ENCODE measurements at regions of chr2 and their contacts with region 1.

Region 1: GRCh38 chr2:39913648-39914461 is 134.8 kb upstream of the THUMPD2 start:
- DNase-seq: no peak
- H3K4me3 ChIP-seq: no peak overlapping the region
- H3K27ac ChIP-seq: no peak overlapping the region
- H3K4me1 ChIP-seq: no peaks in the 10 kb centered on the region
- H3K27me3 ChIP-seq: no peaks in the 10 kb centered on the region
- CTCF ChIP-seq: peak; percentile 78

Region 2: GRCh38 chr2:40554668-40555285 is 640.9 kb after region 1 on chr2:
- intact Hi-C with region 1: loop called (anchors 2 kb)
- DNase-seq: peak; percentile 73
- H3K4me3 ChIP-seq: no peak overlapping the region
- H3K27ac ChIP-seq: no peak overlapping the region
- H3K4me1 ChIP-seq: no peaks in the 10 kb centered on the region
- H3K27me3 ChIP-seq: no peaks in the 10 kb centered on the region
- CTCF ChIP-seq: peak; percentile 74

Region 3: DNA sequence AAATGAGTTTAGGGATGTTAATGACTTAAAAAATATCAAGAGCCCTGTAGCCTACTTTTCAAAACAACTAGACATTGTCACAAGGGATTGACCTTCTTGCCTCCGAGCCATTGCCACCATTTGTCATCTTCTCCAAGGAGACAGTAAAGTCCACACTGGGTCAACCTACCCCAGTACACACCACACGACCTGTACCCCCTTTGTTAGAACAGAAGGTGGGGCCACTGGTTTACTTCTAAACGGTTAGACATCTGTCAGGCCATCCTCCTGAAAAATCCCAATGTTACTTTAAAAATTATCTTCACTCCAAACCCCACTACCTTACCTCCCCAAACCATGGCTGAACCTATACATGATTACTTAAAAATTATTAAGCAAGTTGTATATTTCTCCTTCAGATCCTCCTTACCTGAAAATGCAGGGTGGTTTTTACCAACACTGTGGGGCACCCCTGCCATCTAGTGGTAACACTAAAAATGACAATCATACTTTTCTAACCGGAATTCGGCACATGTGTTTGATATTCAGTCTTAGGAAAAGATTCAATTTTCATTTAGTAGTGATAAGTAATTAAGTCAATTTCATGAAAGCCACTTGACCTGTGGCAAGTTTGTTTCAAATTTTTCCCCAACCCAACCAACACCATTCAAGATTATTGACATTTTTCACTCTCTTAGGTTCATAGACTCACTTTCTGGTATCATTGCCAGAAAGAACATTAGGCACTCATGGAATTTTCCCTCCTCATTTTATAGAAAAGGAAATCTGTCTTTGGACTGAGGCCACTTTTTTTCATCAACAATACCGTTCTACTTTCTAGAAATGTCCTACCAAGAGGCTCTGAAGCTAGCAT is 1868.7 kb after region 1 on chr2:
- intact Hi-C with region 1: loop called (anchors 5 kb)
- DNase-seq: peak; percentile 24
- H3K4me3 ChIP-seq: no peak overlapping the region
- H3K27ac ChIP-seq: no peak overlapping the region
- H3K4me1 ChIP-seq: no peaks in the 10 kb centered on the region
- H3K27me3 ChIP-seq: no peaks in the 10 kb centered on the region
- CTCF ChIP-seq: peak; percentile 67